MCF 10A (cell line): ENCODE measurements at regions of chrX and their contacts with region 1.

Region 1: DNA sequence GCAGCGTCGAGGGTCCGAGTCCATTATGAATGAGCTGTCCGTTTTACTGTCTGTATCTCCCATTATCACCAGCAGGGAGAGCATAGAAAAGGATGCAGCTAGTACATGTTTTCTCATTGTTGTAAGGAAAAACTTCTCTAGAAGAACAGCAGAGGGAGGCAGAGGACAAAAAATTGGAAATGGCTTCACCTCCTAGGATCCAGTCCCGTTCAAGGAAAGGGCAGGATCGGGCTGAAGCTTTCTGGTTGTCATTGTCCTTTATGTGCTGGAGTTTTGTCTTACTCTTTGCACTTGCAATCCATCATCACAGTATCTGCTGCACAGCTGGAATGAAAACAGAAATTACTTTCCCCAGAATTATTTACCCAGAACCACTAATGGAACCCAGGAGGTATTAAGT is 14.7 kb downstream of the NDP start:
- DNase-seq: peak; percentile 90
- H3K4me3 Mint-ChIP-seq: no peak overlapping the region
- H3K27ac Mint-ChIP-seq: no peak overlapping the region
- H3K4me1 Mint-ChIP-seq: no peaks in the 10 kb centered on the region
- H3K27me3 Mint-ChIP-seq: peaks cover 51% of the 10 kb centered on the region
- CTCF ChIP-seq: peak; percentile 87

Region 2: DNA sequence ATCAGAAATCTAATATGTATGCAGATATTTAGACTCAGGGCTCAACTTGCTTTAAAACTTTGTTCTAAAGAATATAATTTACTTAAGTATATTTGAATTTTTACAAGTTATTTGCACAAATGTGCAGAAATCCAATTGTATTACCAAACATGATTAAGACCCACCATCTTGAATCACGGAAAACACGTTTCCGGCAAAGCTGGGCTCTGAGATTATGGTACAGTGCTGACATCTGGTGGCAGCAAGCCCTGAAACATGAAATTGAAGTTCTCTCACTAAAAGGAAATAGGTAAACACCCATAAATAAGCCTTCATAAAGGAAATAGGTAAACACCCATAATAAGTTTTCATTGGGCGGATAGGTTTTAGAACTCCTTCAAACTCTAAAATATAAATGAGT is 400.7 kb before region 1 on chrX:
- CTCF ChIA-PET with region 1: no interaction called
- POLR2A ChIA-PET with region 1: no interaction called
- intact Hi-C with region 1: loop called (anchors 5 kb)
- DNase-seq: peak; percentile 67
- H3K4me3 Mint-ChIP-seq: no peak overlapping the region
- H3K27ac Mint-ChIP-seq: no peak overlapping the region
- H3K4me1 Mint-ChIP-seq: peaks cover 17% of the 10 kb centered on the region
- H3K27me3 Mint-ChIP-seq: peaks cover 74% of the 10 kb centered on the region
- CTCF ChIP-seq: peak; percentile 61

Region 3: DNA sequence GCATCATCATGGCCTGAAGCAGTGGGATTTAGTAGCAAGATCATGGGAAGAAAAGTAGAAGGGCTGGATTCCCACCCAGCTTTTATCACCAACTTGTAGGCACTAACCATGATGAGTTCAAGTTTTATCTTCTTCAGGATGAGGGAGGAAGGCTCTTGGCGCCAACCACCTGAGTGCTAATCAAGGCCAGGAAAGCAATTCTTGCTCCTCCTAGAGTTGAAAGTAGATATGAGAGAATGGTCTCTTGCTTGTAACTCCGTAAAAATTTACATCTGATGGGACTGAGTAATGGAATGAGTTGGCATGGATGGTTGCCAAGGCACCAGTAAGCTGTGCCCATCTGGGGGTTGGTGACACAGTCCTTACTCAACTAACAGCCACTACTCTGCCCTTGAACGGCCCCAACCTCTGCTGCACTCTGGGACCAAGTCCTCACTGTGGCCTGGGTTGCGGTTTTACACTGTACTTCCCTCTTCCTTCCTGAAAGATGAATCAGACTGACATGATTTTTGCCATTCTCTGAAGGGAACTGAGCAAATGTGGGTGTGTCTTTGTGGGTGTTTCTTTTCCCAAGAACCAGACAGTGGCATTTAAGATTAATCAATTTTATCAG is 54.1 kb after region 1 on chrX:
- CTCF ChIA-PET with region 1: interaction called, 5 read pairs
- POLR2A ChIA-PET with region 1: no interaction called
- intact Hi-C with region 1: loop called (anchors 1 kb)
- DNase-seq: peak; percentile 91
- H3K4me3 Mint-ChIP-seq: no peak overlapping the region
- H3K27ac Mint-ChIP-seq: no peak overlapping the region
- H3K4me1 Mint-ChIP-seq: no peaks in the 10 kb centered on the region
- H3K27me3 Mint-ChIP-seq: peaks cover 47% of the 10 kb centered on the region
- CTCF ChIP-seq: peak; percentile 9

Region 4: GRCh38 chrX:44244008-44244407 is 285.5 kb after region 1 on chrX:
- CTCF ChIA-PET with region 1: interaction called, 97 read pairs
- POLR2A ChIA-PET with region 1: interaction called, 5 read pairs
- intact Hi-C with region 1: loop called (anchors 1 kb)
- DNase-seq: peak; percentile 43
- H3K4me3 Mint-ChIP-seq: no peak overlapping the region
- H3K27ac Mint-ChIP-seq: no peak overlapping the region
- H3K4me1 Mint-ChIP-seq: no peaks in the 10 kb centered on the region
- H3K27me3 Mint-ChIP-seq: peaks cover 70% of the 10 kb centered on the region
- CTCF ChIP-seq: peak; percentile 61

Region 5: DNA sequence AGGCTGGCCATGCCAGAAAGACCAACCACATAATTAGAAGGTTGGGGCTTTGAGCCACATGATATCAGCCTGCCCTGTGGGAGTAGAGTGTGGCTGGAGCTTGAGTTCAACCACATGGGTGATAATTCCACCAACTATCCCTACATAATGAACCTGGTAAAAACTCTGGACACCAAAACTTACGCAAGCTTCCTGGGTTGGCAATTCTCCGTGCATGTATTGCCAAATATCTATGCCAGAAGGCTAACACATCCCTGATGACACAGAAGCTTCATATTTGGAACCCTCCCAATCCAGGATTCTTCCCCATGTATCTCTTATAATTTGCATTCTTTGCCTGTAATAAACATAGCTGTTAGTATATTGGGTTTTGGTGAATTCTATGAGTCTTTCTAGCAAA is 515.9 kb after region 1 on chrX:
- CTCF ChIA-PET with region 1: no interaction called
- POLR2A ChIA-PET with region 1: no interaction called
- intact Hi-C with region 1: no loop called
- DNase-seq: peak; percentile 92
- H3K4me3 Mint-ChIP-seq: no peak overlapping the region
- H3K27ac Mint-ChIP-seq: no peak overlapping the region
- H3K4me1 Mint-ChIP-seq: peaks cover 7% of the 10 kb centered on the region
- H3K27me3 Mint-ChIP-seq: peaks cover 44% of the 10 kb centered on the region
- CTCF ChIP-seq: no peak

Region 6: DNA sequence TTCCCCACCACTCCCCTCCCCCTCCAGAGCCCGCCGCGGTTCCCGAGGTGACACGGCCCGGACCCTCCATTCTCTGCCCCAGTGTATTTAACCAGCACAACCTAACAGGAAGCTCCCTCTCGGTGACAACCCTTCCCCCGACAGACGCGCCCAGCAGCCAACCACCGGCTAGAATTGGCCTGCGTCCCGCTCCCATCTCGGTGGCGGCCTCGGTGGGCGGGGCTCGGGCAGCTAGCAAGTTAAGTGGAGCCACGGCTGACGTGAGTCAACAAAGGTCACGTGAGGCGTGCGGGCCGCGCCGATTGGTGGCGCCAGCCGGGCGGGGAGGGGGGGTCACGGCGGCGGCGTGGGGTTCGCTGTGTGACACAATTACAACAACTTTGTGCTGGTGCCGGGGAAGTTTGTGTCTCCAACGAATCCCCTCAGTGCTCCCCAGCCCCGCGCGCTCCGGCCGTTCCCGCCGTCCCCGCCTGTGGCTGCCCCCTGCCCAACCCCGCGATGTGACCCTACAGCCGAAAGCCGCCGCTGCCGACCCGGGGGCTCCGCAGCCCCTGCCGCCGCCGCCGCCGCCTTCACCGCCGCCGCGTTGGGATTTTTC is 914.4 kb after region 1 on chrX and contains the start of gene KDM6A:
- CTCF ChIA-PET with region 1: interaction called, 4 read pairs
- POLR2A ChIA-PET with region 1: no interaction called
- intact Hi-C with region 1: loop called (anchors 10 kb)
- DNase-seq: peak; percentile 98
- H3K4me3 Mint-ChIP-seq: peak within 1 kb of the TSS; percentile 91
- H3K27ac Mint-ChIP-seq: peak within 1 kb of the TSS; percentile 92
- H3K4me1 Mint-ChIP-seq: peaks cover 6% of the 10 kb centered on the region
- H3K27me3 Mint-ChIP-seq: no peaks in the 10 kb centered on the region
- CTCF ChIP-seq: no peak
- total RNA-seq, gene KDM6A: 30.8 and 31.8 TPM in 2 replicates

Region 7: DNA sequence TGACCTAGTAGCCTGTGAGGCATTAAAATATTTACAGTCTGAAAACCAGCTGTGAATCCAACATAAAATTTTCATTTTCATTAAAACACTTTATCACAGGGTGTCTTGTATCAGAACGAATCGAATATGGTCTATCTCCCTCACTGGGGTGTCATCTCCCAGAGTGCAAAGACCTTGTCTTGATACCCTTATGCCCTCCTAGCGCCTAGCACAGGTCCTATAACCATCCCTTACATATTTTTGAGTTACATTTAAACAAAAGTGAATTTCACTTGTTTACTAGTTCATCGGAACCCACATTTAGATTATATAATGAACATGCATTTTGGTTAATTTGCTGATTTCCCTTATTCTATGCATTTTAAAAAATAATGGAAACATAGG is 1228.1 kb after region 1 on chrX:
- CTCF ChIA-PET with region 1: interaction called, 5 read pairs
- POLR2A ChIA-PET with region 1: interaction called, 3 read pairs
- intact Hi-C with region 1: loop called (anchors 1 kb)
- DNase-seq: no peak
- H3K4me3 Mint-ChIP-seq: peak overlapping the region; percentile 72
- H3K27ac Mint-ChIP-seq: no peak overlapping the region
- H3K4me1 Mint-ChIP-seq: peaks cover 6% of the 10 kb centered on the region
- H3K27me3 Mint-ChIP-seq: peaks cover 65% of the 10 kb centered on the region
- CTCF ChIP-seq: no peak